OCI-LY7 (cell line): ENCODE measurements at regions of chr12 and their contacts with region 1.

Region 1: DNA sequence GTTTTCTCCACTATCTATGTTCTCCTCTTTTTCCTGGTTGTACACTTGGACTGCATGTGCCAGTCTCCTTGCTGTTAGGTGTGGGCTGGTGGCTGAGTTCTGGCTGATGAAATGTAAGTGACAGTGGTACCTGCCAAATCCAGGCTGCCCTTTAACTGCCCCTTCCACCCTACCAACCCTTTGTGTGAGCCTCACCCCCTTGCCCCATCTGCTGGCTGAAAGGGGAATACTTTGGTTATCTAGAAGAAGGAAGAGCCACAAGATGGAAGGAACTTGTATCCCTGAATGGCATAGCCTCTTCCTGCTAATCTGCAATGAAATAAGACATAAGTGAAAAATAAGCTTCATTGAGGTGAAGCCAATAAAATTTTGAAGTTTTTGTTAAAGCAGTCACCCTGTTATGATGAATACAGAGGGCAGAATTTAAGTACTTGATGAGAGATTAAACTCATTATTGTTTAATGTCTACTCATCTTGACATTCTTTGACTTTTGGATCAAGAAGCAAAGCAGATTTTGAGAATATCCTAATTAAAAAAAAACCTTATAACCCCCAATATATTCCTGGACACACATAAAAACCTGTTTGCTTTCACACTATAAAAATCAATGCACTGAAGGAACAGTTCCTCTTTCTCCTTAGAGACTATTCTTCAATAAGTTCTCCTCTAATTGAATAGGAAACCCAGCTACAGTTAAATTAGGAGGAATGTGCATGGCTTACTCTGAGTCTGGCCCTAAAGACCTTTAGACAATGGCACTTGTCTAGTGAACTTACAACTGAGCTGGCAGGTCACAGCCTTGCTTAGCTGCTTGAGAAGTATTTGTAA is 262.6 kb upstream of the BTG1 start:
- DNase-seq: peak; percentile 81
- H3K4me3 ChIP-seq: no peak overlapping the region
- H3K27ac ChIP-seq: peak overlapping the region; percentile 12
- H3K4me1 ChIP-seq: peaks cover 52% of the 10 kb centered on the region
- CTCF ChIP-seq: peak; percentile 93

Region 2: GRCh38 chr12:91811481-91812287 is 596.6 kb before region 1 on chr12:
- CTCF ChIA-PET with region 1: no interaction called
- POLR2A ChIA-PET with region 1: no interaction called
- intact Hi-C with region 1: loop called (anchors 5 kb)
- DNase-seq: peak; percentile 66
- H3K4me3 ChIP-seq: no peak overlapping the region
- H3K27ac ChIP-seq: no peak overlapping the region
- H3K4me1 ChIP-seq: no peaks in the 10 kb centered on the region
- CTCF ChIP-seq: peak; percentile 97

Region 3: DNA sequence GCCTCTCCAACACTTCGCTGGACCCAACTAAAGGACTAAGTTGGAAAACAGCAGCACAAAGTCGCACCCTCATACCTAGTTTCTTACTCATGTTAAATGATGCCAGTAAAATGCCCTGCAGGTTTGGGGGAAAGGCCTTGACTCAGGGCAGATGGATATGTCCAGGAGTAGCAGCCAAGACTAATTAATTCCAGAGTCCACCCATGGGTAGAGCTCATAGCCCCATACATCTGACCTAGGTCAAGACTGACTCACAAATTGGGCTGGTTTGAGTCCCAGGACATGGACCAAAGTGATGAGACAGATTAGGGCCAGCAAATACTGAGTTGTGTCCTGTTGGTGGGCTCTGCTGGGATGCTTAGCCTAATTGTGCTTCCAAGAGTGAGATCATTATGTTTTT is 38.6 kb before region 1 on chr12:
- CTCF ChIA-PET with region 1: interaction called, 3 read pairs
- POLR2A ChIA-PET with region 1: interaction called, 76 read pairs
- intact Hi-C with region 1: no loop called
- DNase-seq: no peak
- H3K4me3 ChIP-seq: no peak overlapping the region
- H3K27ac ChIP-seq: no peak overlapping the region
- H3K4me1 ChIP-seq: peaks cover 48% of the 10 kb centered on the region
- CTCF ChIP-seq: no peak

Region 4: DNA sequence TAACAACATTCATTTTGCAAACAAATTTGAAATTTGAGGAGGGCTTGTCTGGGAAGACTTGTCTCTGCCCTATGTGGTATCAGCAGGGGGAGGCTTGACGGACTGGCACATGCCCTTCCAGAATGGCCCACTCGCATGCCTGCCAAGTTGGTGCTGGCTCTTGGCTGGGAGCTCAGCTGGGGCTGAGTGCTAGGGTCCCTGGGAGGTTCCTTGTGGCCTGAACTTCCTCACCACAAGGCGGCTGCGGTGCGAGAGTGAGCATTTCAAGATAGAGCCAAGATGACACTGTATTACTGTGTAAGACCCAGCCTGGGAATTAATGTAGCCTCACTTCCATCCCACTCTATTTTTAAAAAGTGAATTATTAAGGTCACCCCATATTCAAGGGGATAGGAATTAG is 22.9 kb after region 1 on chr12:
- CTCF ChIA-PET with region 1: interaction called, 3 read pairs
- POLR2A ChIA-PET with region 1: interaction called, 17 read pairs
- intact Hi-C with region 1: no loop called
- DNase-seq: peak; percentile 68
- H3K4me3 ChIP-seq: no peak overlapping the region
- H3K27ac ChIP-seq: peak overlapping the region; percentile 6
- H3K4me1 ChIP-seq: peaks cover 51% of the 10 kb centered on the region
- CTCF ChIP-seq: peak; percentile 68

Region 5: DNA sequence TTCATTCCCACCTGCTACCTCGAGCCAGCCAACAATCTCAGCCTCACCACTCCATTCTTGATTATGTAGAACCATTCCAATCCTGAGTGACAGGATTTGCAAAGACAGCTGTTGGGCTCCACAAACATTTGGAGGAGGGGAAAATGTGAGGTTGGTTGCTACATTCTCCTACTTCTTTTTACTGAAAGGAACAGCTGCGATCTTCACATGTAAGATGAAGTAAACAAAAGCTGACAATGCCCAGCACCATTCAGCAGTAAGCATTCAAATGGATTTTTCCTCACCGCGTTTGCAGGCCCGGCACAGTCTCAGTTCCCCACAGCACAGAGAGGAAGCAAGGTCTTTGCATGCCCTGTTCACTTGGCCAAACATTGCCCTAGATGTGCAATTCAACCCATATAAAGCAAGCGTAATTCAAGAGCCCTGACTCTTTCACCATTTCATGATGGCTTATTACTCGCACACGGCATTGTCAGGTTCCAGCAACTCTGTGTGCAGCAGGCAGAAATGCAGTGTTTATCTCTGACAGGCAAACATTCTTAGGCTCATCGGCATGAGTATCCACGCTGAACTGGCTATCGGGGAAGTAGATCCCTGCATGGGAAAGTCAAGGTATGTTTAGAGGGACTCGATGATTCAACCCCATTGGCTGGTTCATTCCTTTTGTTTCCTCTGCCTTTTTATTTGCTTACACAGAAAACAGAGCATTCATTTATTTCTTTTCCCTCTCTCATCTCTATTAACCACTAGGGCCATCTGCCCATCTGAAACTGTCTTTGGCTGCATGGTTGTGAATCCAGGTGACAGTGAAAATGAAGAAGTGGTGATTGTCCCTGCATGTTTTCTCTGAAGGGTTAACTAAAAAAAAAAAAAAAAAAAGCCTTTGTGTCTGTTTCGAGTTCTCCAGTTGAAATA is 58.4 kb after region 1 on chr12:
- CTCF ChIA-PET with region 1: no interaction called
- POLR2A ChIA-PET with region 1: interaction called, 19 read pairs
- intact Hi-C with region 1: loop called (anchors 2 kb)
- DNase-seq: peak; percentile 92
- H3K4me3 ChIP-seq: peak overlapping the region; percentile 70
- H3K27ac ChIP-seq: peak overlapping the region; percentile 98
- H3K4me1 ChIP-seq: peaks cover 83% of the 10 kb centered on the region
- CTCF ChIP-seq: no peak; the same call in 1 of the 2 replicates